ENCODE measurements at regions of chr1 and their contacts with region 1.

Region 1: DNA sequence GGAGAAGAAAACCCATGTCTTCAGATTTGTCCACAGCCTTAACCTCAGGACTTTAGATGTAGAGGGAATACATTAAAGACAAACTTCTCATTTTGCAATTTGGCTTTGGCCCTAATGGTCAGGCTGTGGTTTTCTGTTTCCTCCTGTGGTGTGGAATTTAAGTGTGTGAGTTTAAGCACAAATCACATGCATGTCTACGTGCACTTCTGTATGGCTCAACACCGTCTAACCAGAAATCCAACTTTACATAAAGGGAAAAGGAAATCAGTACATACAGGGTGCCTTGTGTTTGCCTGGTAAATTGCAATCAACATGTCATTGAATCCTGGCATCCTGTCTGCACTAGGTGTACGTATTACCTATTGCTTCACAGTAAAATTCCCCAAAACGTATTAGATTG is 1.2 kb upstream of the ZNF124 start:
- DNase-seq: no peak
- ATAC-seq: no peak
- H3K4me3 ChIP-seq: no peak overlapping the region
- H3K27ac ChIP-seq: no peak overlapping the region
- H3K4me1 ChIP-seq: no peaks in the 10 kb centered on the region
- H3K27me3 ChIP-seq: no peaks in the 10 kb centered on the region

Region 2: DNA sequence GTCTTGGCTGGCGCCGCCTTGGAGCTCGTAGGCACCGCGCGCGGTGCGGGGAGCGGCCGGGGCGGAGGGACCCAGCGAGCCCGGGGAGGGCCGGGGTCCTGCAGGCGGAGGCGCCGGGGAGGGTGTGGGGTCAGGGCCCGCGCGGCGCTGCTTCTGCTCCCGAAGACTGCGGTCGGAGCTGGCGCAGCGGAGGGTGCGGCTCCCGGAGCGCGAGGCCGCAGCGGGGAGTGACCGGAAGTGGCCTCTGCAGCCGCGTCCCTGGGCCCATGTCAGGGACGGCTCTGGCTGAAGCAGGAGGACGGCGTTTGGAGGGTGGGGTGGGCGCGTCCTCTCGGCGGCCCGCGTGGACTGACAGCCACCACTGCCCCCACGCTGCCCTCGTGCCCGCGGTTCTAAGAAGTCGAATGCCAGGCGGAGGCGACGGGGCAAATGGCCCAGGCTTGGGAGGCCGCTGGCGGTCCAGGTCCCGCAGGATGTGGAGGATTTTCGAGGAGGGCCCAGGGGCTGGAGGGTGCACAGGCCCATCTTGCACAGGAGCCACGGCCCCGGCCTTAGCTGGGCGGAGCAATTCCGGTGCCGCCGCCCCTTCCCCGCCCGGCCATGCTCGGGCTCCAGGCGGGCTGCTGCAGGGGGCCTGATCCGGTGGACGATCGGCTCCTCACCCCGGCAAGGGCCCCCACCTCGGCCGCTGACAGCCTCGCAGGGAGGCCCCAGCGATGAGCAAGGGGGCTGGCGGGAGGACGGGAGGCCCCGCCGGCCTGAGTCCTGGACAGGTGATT is 61.1 kb before region 1 on chr1:
- intact Hi-C with region 1: loop called in 1 of 2 experiments (anchors 5 kb)
- DNase-seq: peak; percentile 84 to 89
- ATAC-seq: peak; percentile 93
- H3K4me3 ChIP-seq: peak overlapping the region; percentile 62 to 78
- H3K27ac ChIP-seq: peak overlapping the region in 1 of 2 donors; percentile 35
- H3K4me1 ChIP-seq: no peaks in the 10 kb centered on the region
- H3K27me3 ChIP-seq: no peaks in the 10 kb centered on the region

Region 3: DNA sequence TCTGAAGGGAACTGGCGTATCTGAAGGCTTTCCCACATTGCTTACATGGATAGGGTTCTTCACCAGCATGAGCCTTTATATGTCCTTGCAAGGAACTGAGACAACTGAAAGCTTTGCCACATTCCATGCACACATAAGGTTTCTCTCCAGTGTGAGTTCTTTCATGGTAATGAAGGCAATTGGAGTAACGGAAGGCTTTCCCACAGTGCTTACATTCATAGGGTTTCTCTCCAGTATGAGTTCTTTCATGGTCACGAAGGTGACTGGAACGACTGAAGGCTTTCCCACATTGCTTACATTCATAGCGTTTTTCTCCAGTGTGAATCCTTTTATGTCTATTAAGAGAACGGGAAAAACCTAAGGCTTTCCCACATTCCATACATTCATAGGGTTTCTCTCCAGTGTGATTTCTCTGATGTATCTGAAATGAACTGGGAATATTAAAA is 16.2 kb before region 1 on chr1:
- intact Hi-C with region 1: no loop called
- DNase-seq: no peak
- ATAC-seq: no peak
- H3K4me3 ChIP-seq: no peak overlapping the region
- H3K27ac ChIP-seq: no peak overlapping the region
- H3K4me1 ChIP-seq: no peaks in the 10 kb centered on the region
- H3K27me3 ChIP-seq: no peaks in the 10 kb centered on the region

Measured in aorta (tissue), 5 donors.